Heart left ventricle (tissue), 16 donors: ENCODE measurements at regions of chr7 and their contacts with region 1.

Region 1: DNA sequence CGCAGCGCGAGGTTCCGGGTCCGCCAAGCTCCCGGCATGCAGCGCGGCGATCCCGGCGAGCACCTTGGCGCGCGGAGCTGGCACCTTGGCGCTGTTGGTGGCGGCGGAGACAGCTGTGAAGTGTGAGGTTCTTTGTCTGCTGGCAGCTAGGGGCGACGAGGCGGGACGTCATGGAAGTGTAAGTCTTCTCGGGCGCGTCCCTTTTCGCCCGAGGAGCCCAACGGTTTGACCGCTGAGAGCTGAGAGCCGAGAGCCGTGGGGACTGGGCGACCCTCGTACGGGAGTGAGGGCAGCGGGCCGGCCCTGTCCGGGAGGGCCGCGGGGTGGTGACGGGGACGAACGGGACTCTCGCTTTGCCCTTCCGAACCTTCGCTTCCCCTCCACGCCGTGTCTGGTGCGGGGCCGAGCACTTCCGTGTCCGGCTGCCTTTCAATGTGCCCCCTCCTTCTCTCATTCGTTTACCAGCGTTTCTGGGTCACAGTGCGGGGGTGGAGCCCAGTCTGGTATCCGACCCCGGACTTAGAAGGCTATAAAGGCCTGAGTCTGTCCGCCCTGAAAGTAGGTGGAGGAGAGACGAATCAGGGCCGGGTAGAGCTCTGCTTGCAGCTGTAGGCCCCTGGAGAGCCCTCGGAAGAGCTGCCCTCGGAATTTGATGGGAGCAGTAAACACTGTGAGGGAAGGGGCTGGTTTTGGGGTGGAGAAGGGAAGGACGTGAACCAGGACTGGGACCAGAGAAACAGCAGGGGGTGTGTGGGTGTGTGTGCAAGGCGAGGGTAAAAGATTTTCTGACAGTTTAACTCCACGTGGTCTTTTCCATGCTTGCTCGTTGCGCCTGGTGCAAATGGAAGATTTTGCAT is at the start of gene CRCP:
- DNase-seq: peak; percentile 83 to 92 (median 87)
- ATAC-seq: peak; percentile 88 to 95 (median 94)
- H3K4me3 ChIP-seq: peak within 1 kb of the TSS; percentile 76 to 99 (median 94)
- H3K27ac ChIP-seq: peak within 1 kb of the TSS; percentile 89 to 99 (median 94)
- H3K4me1 ChIP-seq: peaks cover 0 to 53% (median 29%) of the 10 kb centered on the region in 12 donors
- H3K27me3 ChIP-seq: no peaks in the 10 kb centered on the region
- CTCF ChIP-seq: peak in 8 of 12 donors; percentile 7 to 40 (median 23)
- POLR2A ChIP-seq: peak in 1 of 2 donors; percentile 54
- total RNA-seq, gene CRCP: 15.1 to 69.4 (median 24.1) TPM

Region 2: DNA sequence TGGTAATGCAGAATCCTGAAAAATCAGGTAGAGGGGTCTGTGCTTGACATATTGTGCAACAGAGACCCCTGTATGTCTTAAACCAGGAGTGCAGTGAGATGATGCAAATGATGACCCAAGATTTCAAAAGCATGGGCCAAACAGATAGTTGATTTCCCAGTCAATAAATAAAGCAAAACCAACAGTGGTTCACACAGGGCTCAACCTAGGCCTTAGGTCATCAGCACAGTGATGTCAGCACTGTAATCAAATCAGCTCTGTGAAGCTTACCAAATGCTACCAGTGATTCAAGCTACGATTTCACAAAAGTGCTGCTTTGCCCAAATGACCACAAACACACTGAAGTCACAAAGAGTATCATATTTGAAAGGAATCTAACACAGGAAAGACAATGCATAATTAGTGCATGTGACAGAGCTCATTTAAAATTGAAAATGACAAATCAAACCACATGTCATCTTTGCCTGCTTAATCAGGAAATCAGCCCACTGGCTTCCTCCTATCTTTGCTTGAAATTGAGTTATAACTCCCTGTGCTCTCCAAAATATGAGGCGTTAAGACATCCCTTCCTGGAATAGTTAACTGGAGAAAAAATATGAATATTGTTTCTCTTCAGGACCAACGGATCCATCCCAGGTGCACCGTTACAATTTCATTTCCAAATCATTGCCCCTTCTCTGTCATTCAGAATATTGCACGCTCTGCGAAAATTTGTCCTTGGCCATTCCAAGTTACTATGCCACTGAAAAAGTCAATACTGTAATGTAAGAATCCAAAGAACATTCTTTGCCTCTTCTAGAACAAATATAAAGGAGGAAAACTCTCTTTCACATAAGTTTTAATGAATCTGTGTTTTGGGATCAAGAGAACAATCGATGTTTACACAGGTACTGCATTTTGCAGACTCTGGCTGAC is 81.3 kb before region 1 on chr7:
- intact Hi-C with region 1: loop called in 1 of 10 experiments (anchors 10 kb)
- DNase-seq: no peak
- ATAC-seq: no peak
- H3K4me3 ChIP-seq: no peak overlapping the region
- H3K27ac ChIP-seq: no peak overlapping the region
- H3K4me1 ChIP-seq: peaks cover 0 to 4% (median 0%) of the 10 kb centered on the region in 12 donors
- H3K27me3 ChIP-seq: no peaks in the 10 kb centered on the region
- CTCF ChIP-seq: no peak
- POLR2A ChIP-seq: no peak

Region 3: DNA sequence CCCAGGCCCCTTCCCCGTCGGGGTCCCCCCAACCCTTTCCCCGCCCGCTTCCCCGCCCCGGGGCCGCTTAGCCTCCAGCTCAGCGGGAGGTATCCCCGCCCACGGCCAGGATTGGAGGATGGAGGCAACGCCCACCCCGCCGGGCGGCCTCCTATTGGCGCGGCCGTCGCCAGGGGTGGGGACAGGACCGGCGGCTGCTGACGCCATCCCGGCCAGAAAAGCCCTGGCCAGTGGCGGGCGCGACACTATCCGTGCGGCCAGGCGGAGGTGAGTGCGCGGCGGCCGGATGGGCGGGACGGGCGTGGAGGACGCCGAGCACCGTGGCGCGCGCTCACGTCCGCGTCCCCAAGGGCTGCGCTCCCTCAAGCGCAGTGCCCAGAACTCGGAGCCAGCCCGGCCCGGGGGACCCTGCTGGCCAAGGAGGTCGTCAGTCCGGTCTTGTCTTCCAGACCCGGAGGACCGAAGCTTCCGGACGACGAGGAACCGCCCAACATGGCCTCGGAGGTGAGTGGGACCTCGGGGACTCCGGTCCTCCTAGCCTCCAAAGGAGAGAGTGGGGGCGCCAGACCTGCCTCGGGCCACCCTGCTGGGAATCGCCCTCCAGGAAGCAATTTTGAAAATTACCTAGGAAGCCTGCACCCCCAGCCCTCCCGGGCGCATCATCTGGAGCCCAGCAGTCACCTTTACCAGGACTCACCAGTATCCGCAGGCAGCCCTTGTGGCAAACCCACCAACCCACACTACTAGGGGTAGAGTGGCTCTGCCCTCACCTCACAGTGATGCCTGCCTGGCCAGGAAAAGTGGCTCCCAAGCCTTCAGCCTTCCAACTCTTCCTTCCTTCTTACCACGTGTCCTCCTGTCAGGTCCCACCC is 39.2 kb before region 1 on chr7 and contains the start of gene ASL:
- intact Hi-C with region 1: loop called in 2 of 10 experiments (anchors 2 to 5 kb)
- DNase-seq: peak; percentile 94 to 97 (median 96)
- ATAC-seq: peak; percentile 99 to 100 (median 100)
- H3K4me3 ChIP-seq: peak within 1 kb of the TSS; percentile 59 to 96 (median 82)
- H3K27ac ChIP-seq: peak within 1 kb of the TSS; percentile 37 to 84 (median 70)
- H3K4me1 ChIP-seq: peaks cover 0 to 25% (median 12%) of the 10 kb centered on the region in 12 donors
- H3K27me3 ChIP-seq: no peaks in the 10 kb centered on the region
- CTCF ChIP-seq: no peak
- POLR2A ChIP-seq: peak; percentile 73 to 95
- total RNA-seq, gene ASL: 9.7 to 23.1 (median 13.2) TPM

Region 4: DNA sequence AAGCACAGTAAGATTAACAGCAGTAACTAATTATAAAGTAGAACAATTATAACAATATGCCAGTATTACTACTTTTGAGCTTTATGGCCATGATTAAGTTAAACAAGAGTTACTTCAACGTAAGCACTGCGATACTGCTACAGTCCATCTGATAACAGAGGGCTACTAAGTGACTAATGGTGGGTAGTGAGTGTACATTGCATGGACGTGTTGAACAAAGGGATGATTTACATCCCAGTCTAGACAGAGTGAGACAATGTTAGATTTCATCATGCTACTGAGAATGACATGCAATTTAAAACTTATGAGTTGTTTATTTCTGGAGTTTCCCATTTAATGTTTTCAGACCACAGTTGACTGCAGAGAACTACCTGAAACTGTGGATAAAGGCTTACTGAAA is 135.7 kb after region 1 on chr7:
- intact Hi-C with region 1: no loop called
- DNase-seq: no peak
- ATAC-seq: no peak
- H3K4me3 ChIP-seq: no peak overlapping the region
- H3K27ac ChIP-seq: no peak overlapping the region
- H3K4me1 ChIP-seq: peaks cover 0 to 7% (median 0%) of the 10 kb centered on the region in 12 donors
- H3K27me3 ChIP-seq: no peaks in the 10 kb centered on the region
- CTCF ChIP-seq: no peak
- POLR2A ChIP-seq: no peak

Region 5: DNA sequence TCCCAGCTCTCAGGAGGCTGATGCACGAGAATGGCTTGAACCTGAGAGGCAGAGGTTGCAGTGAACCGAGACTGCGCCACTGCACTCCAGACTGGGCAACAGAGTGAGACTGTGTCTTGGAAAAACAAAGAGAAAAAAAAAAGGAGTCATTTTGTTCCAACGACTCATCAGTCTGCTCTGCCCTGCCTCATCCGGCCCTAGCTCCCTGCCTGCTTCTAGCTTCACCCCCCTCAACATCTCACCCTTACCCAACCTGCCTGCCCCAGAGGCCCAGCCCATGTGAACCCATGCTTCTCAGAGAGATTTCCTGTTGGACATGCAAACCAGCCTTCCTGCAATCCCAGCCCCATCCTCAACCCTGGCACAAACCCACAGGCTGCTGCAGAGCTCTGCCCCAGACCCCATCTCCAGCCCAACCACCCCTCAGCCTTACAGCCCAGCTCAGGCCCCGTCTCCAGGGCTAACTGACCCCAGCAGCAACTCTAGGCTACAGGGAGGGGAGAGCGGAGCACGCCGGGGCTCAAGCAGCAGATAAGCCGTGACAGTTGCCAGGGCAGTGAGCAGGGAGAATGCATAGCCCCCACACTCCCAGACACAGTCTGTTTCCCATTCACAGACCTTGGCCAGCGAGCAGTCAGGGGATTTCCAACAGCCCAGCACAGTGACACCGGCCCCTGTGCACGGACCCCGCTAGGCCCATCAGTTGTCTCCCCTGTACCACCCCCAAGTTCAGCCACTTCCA is 427.7 kb after region 1 on chr7:
- intact Hi-C with region 1: no loop called
- DNase-seq: peak in 1 of 5 donors; percentile 44
- ATAC-seq: peak in 3 of 4 donors; percentile 17 to 53 (median 52)
- H3K4me3 ChIP-seq: no peak overlapping the region
- H3K27ac ChIP-seq: no peak overlapping the region
- H3K4me1 ChIP-seq: peaks cover 0 to 19% (median 0%) of the 10 kb centered on the region in 12 donors
- H3K27me3 ChIP-seq: no peaks in the 10 kb centered on the region
- CTCF ChIP-seq: no peak
- POLR2A ChIP-seq: no peak